A673 (cell line): ENCODE measurements at regions of chr6 and their contacts with region 1.

Region 1: DNA sequence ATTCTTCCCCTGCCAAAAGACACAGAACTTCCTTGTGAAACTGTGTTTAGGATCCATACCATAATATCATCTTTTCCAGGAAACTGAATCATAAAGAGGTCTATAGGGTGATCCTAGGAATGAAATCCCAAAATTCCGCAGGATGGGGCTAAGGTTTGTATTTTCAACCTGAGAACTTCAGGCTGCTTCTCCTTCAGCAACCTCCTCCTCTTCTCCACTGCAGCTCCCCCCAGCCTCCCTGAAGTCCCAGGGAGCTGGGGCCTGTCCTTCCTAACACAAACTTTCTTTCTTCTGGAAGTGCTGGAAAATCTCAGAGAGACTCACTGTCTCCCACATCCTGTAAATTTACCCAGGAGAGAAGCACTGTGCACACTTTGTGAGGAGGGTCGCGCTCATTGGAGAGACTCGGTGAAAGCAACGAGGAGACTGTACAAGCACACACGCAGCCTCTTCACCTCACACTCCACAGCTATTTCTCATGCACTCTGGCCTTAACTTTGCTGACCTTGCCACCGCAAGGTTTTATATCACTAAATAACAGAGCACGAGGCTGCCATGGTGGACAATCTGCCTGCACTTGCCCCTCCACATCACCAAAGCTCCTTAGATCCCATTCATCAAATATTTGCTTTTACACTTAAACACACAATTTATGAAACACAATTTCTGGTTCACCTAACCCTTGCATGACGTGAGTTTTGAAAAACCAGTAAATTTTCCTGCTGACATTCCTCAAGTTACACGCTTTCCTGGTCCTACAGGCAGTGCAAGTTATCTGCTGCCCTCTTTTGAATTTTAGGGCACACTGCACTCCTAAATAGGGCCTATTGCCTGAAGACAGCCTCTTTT is 14.3 kb downstream of the ID4 start:
- DNase-seq: peak; percentile 87
- H3K4me3 ChIP-seq: no peak overlapping the region
- H3K27ac ChIP-seq: peak overlapping the region; percentile 49
- H3K4me1 ChIP-seq: peaks cover 20% of the 10 kb centered on the region
- H3K27me3 ChIP-seq: no peaks in the 10 kb centered on the region
- CTCF ChIP-seq: peak; percentile 94

Region 2: DNA sequence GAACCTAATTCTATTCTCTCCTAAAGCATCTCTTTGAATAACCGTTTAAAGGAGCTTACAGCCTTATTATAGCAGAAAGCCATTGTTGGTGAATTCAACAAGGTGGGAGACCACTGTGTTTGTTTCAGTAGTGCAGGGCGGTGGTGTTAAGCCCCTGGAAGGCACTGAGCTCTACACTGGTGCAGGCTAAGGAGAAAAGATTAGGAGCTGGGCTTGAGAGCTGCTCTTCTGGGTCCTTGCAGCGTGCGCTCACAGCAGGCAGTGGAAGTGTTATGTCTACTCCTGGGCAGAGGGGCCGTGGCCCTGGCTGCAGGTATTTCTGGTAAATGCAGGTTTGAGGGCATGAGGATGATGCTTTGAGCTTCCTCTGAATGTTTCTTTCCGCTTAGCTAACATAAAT is 1103.2 kb before region 1 on chr6:
- CTCF ChIA-PET with region 1: no interaction called
- POLR2A ChIA-PET with region 1: no interaction called
- intact Hi-C with region 1: loop called (anchors 5 kb)
- DNase-seq: no peak
- H3K4me3 ChIP-seq: no peak overlapping the region
- H3K27ac ChIP-seq: peak overlapping the region; percentile 13
- H3K4me1 ChIP-seq: peaks cover 26% of the 10 kb centered on the region
- H3K27me3 ChIP-seq: no peaks in the 10 kb centered on the region
- CTCF ChIP-seq: no peak

Region 3: DNA sequence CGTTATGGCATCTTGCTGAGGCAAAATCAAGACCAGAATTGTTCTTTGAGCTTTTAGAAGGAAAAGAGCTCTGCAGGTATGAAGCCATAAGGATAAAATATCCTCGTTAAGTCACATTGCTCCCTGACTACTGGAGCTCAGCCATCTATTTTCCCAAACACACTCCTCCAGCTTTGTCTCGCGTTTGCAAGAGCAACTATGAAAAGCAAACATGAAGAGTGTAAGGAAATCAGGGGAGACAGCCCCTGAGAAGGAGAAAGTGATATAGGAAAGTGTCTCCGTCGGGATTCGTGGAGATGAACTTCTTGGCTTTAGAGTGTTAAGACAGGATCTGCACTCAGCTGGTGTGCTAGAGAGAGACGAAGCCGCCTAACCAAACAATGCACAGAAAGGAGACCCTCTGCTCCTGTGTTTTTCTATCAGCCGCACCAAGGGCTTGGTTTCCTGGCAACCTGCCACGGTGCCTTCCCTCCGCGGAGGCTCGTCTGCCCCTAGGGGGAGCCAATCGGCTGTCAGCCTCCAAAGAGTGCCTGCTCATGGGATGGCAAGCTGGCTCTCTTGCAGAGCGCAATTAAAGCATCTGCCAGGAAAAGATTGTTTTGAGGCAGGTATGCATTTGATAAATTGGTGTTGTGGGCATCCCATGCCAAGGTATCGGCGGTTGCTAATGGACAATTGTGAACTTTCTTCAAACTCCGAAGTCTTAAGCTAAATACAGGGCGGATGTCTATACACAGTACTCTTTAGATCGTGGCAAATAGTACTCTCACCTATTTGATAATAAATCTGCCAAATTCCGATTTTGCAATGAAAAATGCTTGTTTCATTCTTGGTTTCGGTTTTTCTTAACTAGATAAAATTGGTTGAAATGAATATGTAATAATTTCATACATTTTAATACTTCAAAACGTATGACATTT is 861.1 kb before region 1 on chr6:
- CTCF ChIA-PET with region 1: no interaction called
- POLR2A ChIA-PET with region 1: no interaction called
- intact Hi-C with region 1: loop called (anchors 10 kb)
- DNase-seq: peak; percentile 90
- H3K4me3 ChIP-seq: no peak overlapping the region
- H3K27ac ChIP-seq: no peak overlapping the region
- H3K4me1 ChIP-seq: peaks cover 6% of the 10 kb centered on the region
- H3K27me3 ChIP-seq: no peaks in the 10 kb centered on the region
- CTCF ChIP-seq: peak; percentile 94

Region 4: GRCh38 chr6:19024737-19025136 is 826.7 kb before region 1 on chr6:
- CTCF ChIA-PET with region 1: no interaction called
- POLR2A ChIA-PET with region 1: no interaction called
- intact Hi-C with region 1: loop called (anchors 2 kb)
- DNase-seq: peak; percentile 70
- H3K4me3 ChIP-seq: no peak overlapping the region
- H3K27ac ChIP-seq: no peak overlapping the region
- H3K4me1 ChIP-seq: no peaks in the 10 kb centered on the region
- H3K27me3 ChIP-seq: no peaks in the 10 kb centered on the region
- CTCF ChIP-seq: peak; percentile 71

Region 5: DNA sequence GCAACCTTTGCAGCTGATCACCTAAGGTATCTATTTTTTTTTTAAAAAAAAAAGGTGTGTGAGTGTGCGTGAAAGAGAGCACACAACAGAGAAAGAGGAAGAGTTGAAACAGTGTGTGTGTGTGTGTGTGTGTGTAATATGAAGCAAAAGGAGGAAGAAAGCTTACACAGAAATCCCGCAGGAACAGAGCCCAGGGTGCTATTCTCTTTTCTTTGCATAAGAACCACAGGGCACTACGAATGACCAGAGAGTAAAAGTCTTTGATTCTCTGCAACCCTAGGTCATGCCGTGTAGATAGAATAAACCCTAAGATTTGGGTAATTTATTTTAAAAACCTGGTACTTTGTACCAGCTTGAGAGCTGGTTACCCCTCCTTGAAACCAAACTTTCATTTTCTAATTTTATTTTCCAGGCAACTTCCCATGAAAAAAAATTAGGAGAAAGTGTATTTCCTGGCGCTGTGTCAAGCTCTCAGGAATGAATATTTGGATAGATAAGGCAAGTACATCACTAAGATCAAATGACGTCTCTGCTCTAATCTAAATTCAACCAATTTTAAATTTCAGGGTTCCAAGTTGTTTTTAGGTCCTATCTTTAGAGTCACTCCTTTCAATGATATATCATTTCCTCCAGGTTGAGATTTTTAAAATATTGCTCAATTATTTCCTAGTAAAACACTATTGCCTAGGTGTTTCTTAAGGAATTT is 62.2 kb before region 1 on chr6:
- CTCF ChIA-PET with region 1: no interaction called
- POLR2A ChIA-PET with region 1: no interaction called
- intact Hi-C with region 1: no loop called
- DNase-seq: no peak
- H3K4me3 ChIP-seq: no peak overlapping the region
- H3K27ac ChIP-seq: no peak overlapping the region
- H3K4me1 ChIP-seq: peaks cover 5% of the 10 kb centered on the region
- H3K27me3 ChIP-seq: no peaks in the 10 kb centered on the region
- CTCF ChIP-seq: no peak